Right lobe of liver (tissue), 6 donors: ENCODE measurements at regions of chr9 and their contacts with region 1.

Region 1: DNA sequence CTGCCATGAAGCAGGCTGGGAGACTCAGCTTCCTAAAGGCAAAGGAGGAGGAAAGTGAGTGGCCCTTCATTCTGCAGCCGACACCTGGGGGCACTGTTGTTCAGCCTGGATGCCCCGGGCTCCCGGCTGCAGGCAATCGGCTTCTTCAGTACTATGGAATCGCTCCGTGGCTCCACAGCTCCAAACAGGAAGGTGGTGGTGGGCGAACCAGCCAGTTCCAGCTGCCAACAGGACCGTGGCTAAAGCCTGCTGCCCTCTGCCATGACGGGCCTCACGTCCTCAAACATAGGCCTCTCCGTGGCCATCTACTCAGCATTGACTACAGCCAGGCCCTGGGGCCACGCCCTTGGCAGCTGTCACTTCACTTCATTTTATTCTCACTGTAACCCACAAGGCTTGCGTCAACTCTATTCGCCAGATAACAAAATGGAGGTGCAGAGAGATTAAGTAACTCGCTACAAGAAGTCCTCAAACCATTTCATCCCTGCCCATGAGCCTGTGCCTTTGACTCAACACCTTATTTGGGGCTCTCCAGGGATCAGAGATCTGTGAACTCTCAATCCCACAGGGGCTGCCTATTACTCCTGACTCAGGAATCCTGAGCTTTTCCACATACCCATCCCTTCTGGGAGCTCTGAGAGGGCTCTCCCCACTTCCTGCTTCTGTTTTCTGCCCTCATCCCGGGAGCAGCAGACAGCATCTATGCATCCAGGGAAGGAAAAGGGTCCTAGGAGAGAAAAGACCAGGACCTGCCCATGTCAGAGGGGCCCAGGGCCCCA is 38.0 kb downstream of the PAX5 start:
- DNase-seq: peak; percentile 59 to 69 (median 61)
- ATAC-seq: peak; percentile 85 to 95 (median 88)
- H3K4me3 ChIP-seq: no peak overlapping the region
- H3K27ac ChIP-seq: no peak overlapping the region
- H3K4me1 ChIP-seq: no peaks in the 10 kb centered on the region
- H3K27me3 ChIP-seq: no peaks in the 10 kb centered on the region
- CTCF ChIP-seq: peak; percentile 50 to 63 (median 54)
- POLR2A ChIP-seq: no peak

Region 2: GRCh38 chr9:36873247-36873875 is 122.8 kb before region 1 on chr9:
- intact Hi-C with region 1: loop called in 1 of 2 experiments (anchors 10 kb)
- DNase-seq: peak; percentile 72 to 77 (median 74)
- ATAC-seq: peak; percentile 86 to 93 (median 90)
- H3K4me3 ChIP-seq: no peak overlapping the region
- H3K27ac ChIP-seq: no peak overlapping the region
- H3K4me1 ChIP-seq: no peaks in the 10 kb centered on the region
- H3K27me3 ChIP-seq: no peaks in the 10 kb centered on the region
- CTCF ChIP-seq: peak; percentile 75 to 91 (median 88)
- POLR2A ChIP-seq: no peak

Region 3: DNA sequence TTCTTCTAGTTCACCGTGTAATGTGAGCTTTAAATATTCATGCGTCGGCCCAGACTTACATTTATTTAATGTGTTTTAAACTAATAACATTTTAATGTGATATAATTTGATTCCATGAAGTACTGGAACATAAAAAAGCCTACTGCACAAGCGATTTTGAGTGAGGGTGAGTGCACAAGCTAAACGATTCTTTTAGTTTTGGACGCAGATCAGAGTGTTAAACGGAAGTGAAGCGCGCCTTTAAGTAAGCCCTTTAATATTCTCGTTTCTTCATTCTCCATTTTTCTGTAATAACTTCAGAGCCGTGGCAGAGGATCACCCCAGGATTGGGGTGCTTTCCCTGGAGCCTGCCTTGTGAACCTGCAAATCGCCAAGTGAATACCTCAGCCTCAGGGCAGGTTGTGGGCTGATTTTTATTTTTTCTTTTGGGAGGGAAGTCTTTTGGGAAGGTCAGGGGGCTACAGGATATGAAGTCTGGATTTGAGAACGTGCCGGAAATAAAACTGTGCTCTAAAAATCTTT is 42.9 kb after region 1 on chr9:
- intact Hi-C with region 1: no loop called
- DNase-seq: no peak
- ATAC-seq: no peak
- H3K4me3 ChIP-seq: no peak overlapping the region
- H3K27ac ChIP-seq: no peak overlapping the region
- H3K4me1 ChIP-seq: peaks cover 0 to 27% (median 4%) of the 10 kb centered on the region in 4 donors
- H3K27me3 ChIP-seq: peaks cover 31 to 45% of the 10 kb centered on the region in 2 donors
- CTCF ChIP-seq: no peak
- POLR2A ChIP-seq: no peak

Region 4: GRCh38 chr9:37144762-37145161 is 148.6 kb after region 1 on chr9:
- intact Hi-C with region 1: no loop called
- DNase-seq: no peak
- ATAC-seq: no peak
- H3K4me3 ChIP-seq: no peak overlapping the region
- H3K27ac ChIP-seq: no peak overlapping the region
- H3K4me1 ChIP-seq: peaks cover 0 to under 1% (median 0%) of the 10 kb centered on the region in 4 donors
- H3K27me3 ChIP-seq: no peaks in the 10 kb centered on the region
- CTCF ChIP-seq: no peak
- POLR2A ChIP-seq: no peak